ENCODE measurements at regions of chr1 and their contacts with region 1.

Region 1: DNA sequence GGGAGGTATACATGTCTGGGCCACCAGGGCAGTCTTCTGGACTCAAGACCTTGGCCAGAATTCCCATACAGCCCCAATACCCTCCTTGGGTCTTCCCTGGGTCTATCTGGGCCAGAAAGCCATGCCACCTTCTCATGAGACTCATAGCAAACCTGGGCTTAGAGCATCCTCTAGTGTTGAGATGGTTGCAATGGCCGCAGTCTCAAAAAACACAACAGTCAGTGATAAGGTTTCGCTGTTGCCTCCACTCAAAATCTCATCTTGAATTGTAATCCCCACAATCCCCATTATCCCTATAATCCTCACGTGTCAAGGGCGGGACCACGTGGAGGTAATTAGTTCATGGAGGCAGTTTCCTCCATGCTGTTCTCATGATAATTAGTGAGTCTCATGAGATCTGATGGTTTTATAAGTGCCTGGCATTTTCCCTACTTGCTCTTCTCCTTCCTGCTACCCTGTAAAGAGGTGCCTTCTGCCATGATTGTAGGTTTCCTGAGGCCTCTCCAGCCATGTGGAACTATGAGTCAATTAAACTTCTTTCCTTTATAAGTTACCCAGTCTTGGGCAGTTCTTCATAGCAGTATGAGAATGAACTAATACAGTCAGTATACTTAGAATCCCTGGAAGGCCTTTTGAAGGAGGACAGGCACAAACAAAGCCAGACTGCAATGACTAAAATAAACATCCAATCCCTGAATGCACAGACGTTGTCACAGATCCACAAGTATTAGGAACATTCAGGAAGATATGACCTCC is 77.0 kb downstream of the CTH start:
- DNase-seq: peak; percentile 23
- H3K4me3 Mint-ChIP-seq: no peak overlapping the region
- H3K27ac Mint-ChIP-seq: no peak overlapping the region
- H3K4me1 Mint-ChIP-seq: no peaks in the 10 kb centered on the region
- H3K27me3 Mint-ChIP-seq: no peaks in the 10 kb centered on the region
- CTCF ChIP-seq: no peak

Region 2: DNA sequence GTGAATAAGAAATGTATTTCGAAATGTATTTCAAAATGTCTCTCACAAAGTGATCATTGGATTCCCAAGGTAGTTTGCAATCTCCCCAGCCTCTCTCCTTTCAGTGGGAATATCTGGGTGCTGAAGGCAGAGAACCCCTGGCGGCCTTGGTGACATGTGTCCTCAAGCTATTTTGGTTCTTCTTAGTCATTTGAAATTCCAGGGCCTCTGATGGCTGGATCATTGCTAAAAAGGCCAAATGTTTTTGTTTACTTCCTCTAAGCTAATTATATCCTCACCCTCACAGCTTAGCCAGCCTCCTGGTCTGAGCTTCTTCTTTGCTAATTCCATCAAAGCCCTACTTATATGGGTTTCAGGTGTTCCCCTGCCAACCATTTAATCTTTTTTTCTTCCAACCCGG is 353.9 kb before region 1 on chr1:
- CTCF ChIA-PET with region 1: no interaction called
- intact Hi-C with region 1: loop called (anchors 1 kb)
- DNase-seq: no peak
- H3K4me3 Mint-ChIP-seq: no peak overlapping the region
- H3K27ac Mint-ChIP-seq: no peak overlapping the region
- H3K4me1 Mint-ChIP-seq: no peaks in the 10 kb centered on the region
- H3K27me3 Mint-ChIP-seq: no peaks in the 10 kb centered on the region
- CTCF ChIP-seq: no peak

Region 3: DNA sequence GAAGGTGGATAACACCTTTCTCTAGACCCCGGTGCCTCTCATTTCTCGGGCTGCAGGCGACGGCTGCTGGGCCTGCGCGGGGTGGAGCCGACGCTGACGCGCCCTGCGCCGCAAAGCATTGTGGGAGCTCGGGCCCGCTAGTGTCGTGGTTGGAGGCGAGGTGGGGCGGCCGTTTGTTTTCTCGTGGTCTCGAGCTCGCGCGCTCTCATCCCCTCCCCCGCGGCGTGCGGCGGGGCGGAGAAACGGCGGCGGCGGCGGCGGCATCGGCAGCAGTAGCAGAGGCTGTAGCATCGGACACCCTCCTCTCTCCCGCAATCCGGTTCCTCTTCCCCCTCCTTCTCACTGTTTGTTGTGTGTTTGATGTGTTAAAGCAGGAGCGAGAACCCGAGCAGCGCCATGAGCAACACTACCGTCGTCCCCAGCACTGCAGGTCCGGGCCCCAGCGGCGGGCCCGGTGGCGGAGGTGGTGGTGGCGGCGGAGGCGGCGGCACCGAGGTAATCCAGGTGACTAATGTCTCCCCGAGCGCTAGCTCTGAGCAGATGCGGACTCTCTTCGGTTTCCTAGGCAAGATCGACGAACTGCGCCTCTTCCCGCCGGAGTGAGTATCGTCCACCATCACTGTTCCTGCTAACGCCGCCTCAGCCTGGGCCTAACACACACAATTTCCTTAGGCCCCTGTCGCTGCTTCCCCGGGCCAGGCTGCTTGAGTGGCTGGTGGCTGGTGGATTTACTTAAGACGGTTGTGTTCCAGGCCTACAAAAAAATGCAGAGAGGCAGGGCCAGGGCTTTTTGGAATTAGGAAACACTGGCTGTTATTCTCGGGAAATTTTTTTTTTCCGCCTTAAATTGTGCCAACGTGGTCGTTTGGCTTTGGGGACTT is 266.6 kb before region 1 on chr1 and contains the start of gene SRSF11:
- CTCF ChIA-PET with region 1: no interaction called
- intact Hi-C with region 1: loop called (anchors 1 kb)
- DNase-seq: peak; percentile 97
- H3K4me3 Mint-ChIP-seq: peak within 1 kb of the TSS; percentile 89
- H3K27ac Mint-ChIP-seq: peak within 1 kb of the TSS; percentile 95
- H3K4me1 Mint-ChIP-seq: peaks cover 33% of the 10 kb centered on the region
- H3K27me3 Mint-ChIP-seq: no peaks in the 10 kb centered on the region
- CTCF ChIP-seq: no peak
- total RNA-seq, gene SRSF11: 143 and 148 TPM in 2 replicates

Region 4: DNA sequence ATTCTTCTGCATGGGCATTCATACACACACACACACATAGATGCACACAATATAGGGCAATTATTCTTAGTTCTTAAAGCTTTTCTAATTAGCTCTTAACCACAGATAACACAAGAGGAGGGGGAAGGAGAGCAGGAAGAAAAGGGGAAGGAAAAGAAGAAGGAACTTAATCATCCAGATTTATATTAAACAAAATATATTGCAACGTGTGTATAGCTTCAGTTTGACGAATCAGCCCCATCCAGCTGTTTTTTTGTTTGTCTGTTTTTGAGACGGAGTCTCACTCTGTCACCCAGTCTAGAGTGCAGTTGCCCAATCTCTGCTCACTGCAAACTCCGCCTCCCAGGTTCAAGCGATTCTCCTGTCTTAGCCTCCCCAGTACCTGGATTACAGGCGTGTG is 111.9 kb before region 1 on chr1:
- CTCF ChIA-PET with region 1: no interaction called
- intact Hi-C with region 1: no loop called
- DNase-seq: no peak
- H3K4me3 Mint-ChIP-seq: no peak overlapping the region
- H3K27ac Mint-ChIP-seq: no peak overlapping the region
- H3K4me1 Mint-ChIP-seq: peaks cover 8% of the 10 kb centered on the region
- H3K27me3 Mint-ChIP-seq: no peaks in the 10 kb centered on the region
- CTCF ChIP-seq: no peak

Region 5: DNA sequence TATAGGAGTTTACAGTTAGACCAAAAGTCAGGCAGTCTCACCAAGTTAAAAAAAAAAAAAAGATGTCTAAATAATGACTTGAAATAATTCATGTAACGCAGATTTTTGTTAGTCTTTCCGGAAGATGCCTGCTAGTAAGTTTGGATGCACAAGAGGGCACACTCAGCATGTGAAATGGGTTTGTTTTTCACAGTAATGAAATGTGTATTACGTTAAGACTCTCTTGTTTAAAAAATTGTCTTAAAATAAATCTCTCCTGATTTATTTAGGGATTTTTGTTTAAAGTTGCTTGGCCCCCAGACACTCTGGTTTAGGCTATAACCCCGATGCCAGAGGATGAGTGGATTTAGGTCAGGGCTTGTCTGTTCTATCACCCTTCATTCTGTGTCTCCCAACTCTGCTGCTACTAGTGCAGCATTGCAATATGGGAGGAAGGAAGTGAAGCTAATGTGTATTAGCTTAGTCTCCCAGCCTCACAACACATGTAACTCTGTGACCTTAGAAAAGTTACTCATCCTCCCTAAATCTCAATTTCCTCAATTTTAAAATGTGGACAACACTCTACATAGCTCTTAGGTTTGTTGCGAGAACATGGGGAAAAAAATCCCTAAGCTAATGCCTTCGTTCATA is 51.4 kb before region 1 on chr1:
- CTCF ChIA-PET with region 1: no interaction called
- intact Hi-C with region 1: loop called (anchors 5 kb)
- DNase-seq: no peak
- H3K4me3 Mint-ChIP-seq: no peak overlapping the region
- H3K27ac Mint-ChIP-seq: no peak overlapping the region
- H3K4me1 Mint-ChIP-seq: peaks cover 8% of the 10 kb centered on the region
- H3K27me3 Mint-ChIP-seq: no peaks in the 10 kb centered on the region
- CTCF ChIP-seq: no peak

Region 6: GRCh38 chr1:70465911-70466310 is 22.2 kb before region 1 on chr1:
- CTCF ChIA-PET with region 1: no interaction called
- intact Hi-C with region 1: no loop called
- DNase-seq: no peak
- H3K4me3 Mint-ChIP-seq: no peak overlapping the region
- H3K27ac Mint-ChIP-seq: no peak overlapping the region
- H3K4me1 Mint-ChIP-seq: no peaks in the 10 kb centered on the region
- H3K27me3 Mint-ChIP-seq: no peaks in the 10 kb centered on the region
- CTCF ChIP-seq: no peak

Region 7: DNA sequence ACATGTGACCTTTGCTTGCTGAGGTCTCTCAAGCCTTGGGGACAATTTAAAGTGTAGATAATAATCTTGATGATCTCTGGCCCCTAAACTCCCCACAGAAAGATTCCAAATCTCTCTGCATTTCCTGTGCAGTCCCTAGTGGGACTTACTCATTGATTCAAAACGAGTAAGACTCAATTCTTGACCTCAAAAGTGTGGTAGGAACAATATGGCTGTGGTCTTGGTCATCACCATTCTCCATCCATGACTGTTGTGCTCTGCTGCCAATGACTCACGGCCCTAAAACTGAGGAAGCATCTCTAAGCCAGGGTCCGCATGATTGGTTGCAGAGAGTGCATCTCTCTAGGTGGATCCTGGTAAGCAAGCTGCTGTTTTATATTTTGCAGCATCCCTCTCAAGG is 291.5 kb after region 1 on chr1:
- CTCF ChIA-PET with region 1: no interaction called
- intact Hi-C with region 1: no loop called
- DNase-seq: no peak
- H3K4me3 Mint-ChIP-seq: no peak overlapping the region
- H3K27ac Mint-ChIP-seq: no peak overlapping the region
- H3K4me1 Mint-ChIP-seq: no peaks in the 10 kb centered on the region
- H3K27me3 Mint-ChIP-seq: no peaks in the 10 kb centered on the region
- CTCF ChIP-seq: no peak

Measured in Calu3 (cell line).